ENCODE measurements at regions of chr12 and their contacts with region 1.

Region 1: GRCh38 chr12:127230843-127231260 is 1036.1 kb upstream of the TMEM132C start:
- H3K4me3 Mint-ChIP-seq: no peak overlapping the region
- H3K27ac Mint-ChIP-seq: no peak overlapping the region
- H3K4me1 Mint-ChIP-seq: no peaks in the 10 kb centered on the region
- H3K27me3 Mint-ChIP-seq: peaks cover 5% of the 10 kb centered on the region

Region 2: DNA sequence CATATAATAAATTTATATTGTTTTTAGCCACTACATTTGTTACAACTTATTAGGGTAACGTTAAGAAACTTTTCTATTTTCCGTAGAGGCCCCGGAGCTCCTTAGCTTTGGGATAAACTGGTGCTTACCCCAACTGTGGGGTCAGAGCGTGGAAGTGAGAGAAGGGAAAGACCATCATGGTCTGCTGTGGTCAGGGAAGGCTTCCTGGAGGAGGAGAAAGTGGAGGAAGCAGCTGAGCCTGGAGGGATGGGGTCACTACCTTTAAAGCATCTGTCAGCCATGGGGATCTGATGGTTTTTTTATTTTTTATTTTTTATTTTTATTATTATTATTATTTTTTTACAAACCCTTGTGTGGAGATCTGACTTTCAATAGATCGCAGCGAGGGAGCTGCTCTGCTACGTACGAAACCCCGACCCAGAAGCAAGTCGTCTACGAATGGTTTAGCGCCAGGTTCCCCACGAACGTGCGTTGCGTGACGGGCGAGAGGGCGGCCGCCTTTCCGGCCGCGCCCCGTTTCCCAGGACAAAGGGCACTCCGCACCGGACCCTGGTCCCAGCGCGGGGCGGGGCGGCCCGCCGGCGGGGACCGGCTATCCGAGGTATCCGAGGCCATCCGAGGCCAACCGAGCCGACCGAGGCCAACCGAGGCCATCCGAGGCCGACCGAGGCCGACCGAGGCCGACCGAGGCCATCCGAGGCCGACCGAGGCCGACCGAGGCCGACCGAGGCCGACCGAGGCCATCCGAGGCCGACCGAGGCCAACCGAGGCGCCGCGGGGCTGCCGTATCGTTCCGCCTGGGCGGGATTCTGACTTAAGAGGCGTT is 65.1 kb before region 1 on chr12:
- intact Hi-C with region 1: loop called (anchors 5 kb)
- H3K4me3 Mint-ChIP-seq: peak overlapping the region; percentile 65
- H3K27ac Mint-ChIP-seq: peak overlapping the region; percentile 42
- H3K4me1 Mint-ChIP-seq: peaks cover 19% of the 10 kb centered on the region
- H3K27me3 Mint-ChIP-seq: peaks cover 27% of the 10 kb centered on the region

Region 3: DNA sequence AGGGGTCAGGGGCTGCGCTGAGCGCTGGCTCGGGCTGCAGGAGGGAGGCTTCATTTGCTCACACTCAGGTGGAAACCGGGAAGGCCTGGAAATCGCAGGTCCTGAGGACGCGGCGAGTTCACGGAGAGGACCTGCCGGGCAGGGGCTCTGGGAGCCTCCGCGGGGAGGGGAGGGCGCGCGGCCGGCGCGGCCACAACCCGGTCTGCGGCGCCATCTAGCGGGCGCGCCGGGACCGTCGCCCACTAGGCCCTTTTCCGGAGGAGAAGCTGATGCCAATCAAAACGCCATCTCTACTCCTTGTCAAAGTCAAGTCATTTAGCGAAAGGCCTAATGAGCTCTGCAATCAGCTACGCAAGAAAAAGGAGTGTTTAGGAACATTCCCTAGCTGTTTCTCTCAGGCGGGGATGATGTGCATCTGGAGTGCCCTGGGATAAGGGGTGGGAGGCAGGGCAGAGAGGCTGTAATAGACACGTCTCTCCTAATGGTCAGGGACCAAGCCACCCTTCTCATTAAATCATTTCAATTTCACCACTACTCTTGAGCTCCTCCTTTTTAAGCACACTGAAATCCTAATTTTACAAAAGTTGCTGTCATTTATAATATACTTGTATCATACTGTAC is 150.3 kb after region 1 on chr12:
- intact Hi-C with region 1: no loop called
- H3K4me3 Mint-ChIP-seq: no peak overlapping the region
- H3K27ac Mint-ChIP-seq: no peak overlapping the region
- H3K4me1 Mint-ChIP-seq: no peaks in the 10 kb centered on the region
- H3K27me3 Mint-ChIP-seq: peaks cover 3% of the 10 kb centered on the region

Measured in dendritic cell treated with granulocyte-macrophage colony-stimulating factor and Interleukin-4, amounts not matched to agents 40 ng/mL and 50 ng/mL, for 4 days (primary cell).